ENCODE measurements at regions of chr4 and their contacts with region 1.

Region 1: GRCh38 chr4:7192252-7193029 is at the start of gene SORCS2:
- DNase-seq: peak in 1 of 2 experiments; percentile 82
- H3K4me3 ChIP-seq: peak within 1 kb of the TSS; percentile 71
- H3K27ac ChIP-seq: no peak within 1 kb of the TSS
- H3K4me1 ChIP-seq: peaks cover 37% of the 10 kb centered on the region
- H3K27me3 ChIP-seq: peaks cover 3% of the 10 kb centered on the region
- CTCF ChIP-seq: no peak; the same call in 1 of the 2 replicates
- total RNA-seq, gene SORCS2: 20.7 and 25.8 TPM in 2 replicates

Region 2: DNA sequence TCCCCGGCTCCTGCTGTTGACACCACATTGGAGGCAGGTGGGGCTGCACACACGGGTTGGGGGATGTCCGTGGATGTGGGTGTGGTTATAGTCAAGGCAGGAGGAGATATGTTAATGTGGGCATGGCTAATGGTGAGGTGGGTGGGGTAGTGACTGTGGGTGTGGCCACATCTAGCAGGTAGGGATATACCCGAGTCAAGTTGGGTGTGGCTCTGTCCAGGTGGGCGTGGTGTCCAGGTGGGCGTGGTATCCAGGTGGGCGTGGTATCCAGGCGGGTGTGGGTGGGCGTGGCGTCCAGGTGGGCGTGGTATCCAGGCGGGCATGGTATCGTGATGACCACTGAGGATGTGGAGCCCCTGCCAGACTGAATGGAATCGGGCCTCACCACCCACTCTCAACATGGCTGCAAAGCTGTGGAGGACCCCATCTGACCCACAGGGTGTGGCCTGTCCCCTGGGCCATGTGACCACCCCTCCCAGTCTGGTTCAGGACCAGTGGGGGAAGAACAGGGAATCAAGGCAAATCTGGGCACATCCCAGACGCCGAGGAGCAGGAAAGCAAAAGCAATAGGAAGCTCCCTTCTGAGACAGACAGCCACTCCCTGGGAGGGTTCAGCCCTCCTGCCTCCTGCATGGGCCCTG is 596.4 kb before region 1 on chr4:
- CTCF ChIA-PET with region 1: no interaction called
- POLR2A ChIA-PET with region 1: no interaction called
- intact Hi-C with region 1: no loop called
- DNase-seq: peak in 1 of 2 experiments; percentile 55
- H3K4me3 ChIP-seq: no peak overlapping the region
- H3K27ac ChIP-seq: no peak overlapping the region
- H3K4me1 ChIP-seq: no peaks in the 10 kb centered on the region
- H3K27me3 ChIP-seq: no peaks in the 10 kb centered on the region
- CTCF ChIP-seq: no peak

Region 3: DNA sequence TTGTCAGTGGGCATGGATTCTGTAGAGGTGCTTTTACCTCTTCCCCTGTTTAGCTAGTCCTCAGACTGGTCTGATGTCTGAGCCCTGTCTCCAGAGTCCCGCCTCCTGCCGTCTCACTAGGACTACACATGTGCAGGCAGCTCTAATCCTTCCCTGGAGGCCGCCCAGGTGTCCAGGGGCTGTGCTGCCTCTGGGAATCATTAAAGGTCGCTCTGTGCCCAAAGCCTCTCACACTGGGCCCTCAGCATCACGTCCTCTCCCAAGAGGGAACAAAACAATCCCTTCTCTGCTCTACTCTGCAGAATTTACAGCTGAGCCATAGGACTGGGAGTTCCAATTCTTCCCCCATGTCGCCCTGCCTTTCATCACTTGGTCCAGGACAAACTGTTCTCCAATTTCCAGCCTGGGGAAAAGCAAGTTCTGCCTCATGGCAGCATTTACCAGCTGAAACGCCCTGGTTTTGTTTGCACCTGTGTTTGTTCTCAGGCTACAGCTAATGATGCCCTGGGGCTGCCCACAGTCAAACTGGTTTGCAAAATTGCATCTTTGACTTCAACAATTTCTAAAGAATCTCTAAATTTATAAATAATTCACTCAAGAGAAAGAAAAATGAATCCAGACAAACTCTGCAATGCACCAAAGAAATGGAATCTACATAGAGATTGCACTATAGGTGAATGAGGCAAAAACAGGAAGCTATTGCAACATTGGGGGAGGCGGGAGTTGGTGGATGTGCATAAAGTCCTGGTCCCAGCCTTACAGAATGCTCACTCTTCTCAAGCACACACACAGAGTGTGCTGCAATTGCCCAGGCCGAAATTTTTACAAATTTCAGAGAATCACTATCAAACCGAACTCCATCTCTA is 559.2 kb before region 1 on chr4:
- CTCF ChIA-PET with region 1: no interaction called
- POLR2A ChIA-PET with region 1: no interaction called
- intact Hi-C with region 1: no loop called
- DNase-seq: peak; percentile 25 to 80
- H3K4me3 ChIP-seq: no peak overlapping the region
- H3K27ac ChIP-seq: peak overlapping the region; percentile 89
- H3K4me1 ChIP-seq: peaks cover 22% of the 10 kb centered on the region
- H3K27me3 ChIP-seq: no peaks in the 10 kb centered on the region
- CTCF ChIP-seq: no peak

Region 4: GRCh38 chr4:6716018-6716911 is 476.2 kb before region 1 on chr4 and contains the start of gene BLOC1S4:
- CTCF ChIA-PET with region 1: no interaction called
- POLR2A ChIA-PET with region 1: interaction called, 21 read pairs
- intact Hi-C with region 1: no loop called
- DNase-seq: peak; percentile 72 to 87
- H3K4me3 ChIP-seq: peak within 1 kb of the TSS; percentile 94
- H3K27ac ChIP-seq: peak within 1 kb of the TSS; percentile 51
- H3K4me1 ChIP-seq: peaks cover 11% of the 10 kb centered on the region
- H3K27me3 ChIP-seq: no peaks in the 10 kb centered on the region
- CTCF ChIP-seq: no peak
- total RNA-seq, gene BLOC1S4: 11.7 and 13.9 TPM in 2 replicates

Region 5: DNA sequence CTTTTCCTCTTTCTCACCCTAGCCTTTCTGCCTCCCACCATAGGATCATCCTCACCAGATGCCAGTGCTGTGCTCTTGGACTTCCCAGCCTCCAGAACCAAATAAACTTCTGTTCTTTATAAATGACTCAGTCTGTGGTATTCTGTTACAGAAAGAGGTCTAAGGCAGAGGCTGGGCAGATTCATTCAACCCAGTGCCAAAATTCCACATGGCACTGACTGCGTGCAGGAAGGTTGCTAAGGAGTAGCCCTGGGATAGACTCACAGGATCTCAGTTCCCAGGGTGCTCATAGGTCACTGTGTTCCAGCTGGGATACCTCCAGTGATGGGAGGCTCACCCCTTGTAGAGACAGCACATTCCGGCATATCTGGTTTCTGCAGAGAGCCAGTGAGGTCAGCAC is 21.9 kb after region 1 on chr4:
- CTCF ChIA-PET with region 1: interaction called, 4 read pairs
- POLR2A ChIA-PET with region 1: no interaction called
- intact Hi-C with region 1: loop called (anchors 2 kb)
- DNase-seq: no peak
- H3K4me3 ChIP-seq: no peak overlapping the region
- H3K27ac ChIP-seq: peak overlapping the region; percentile 90
- H3K4me1 ChIP-seq: peaks cover 67% of the 10 kb centered on the region
- H3K27me3 ChIP-seq: no peaks in the 10 kb centered on the region
- CTCF ChIP-seq: no peak

Region 6: GRCh38 chr4:7280926-7281690 is 88.7 kb after region 1 on chr4:
- CTCF ChIA-PET with region 1: interaction called, 3 read pairs
- POLR2A ChIA-PET with region 1: no interaction called
- intact Hi-C with region 1: loop called (anchors 5 kb)
- DNase-seq: no peak
- H3K4me3 ChIP-seq: no peak overlapping the region
- H3K27ac ChIP-seq: no peak overlapping the region
- H3K4me1 ChIP-seq: peaks cover 6% of the 10 kb centered on the region; the same call in 1 of the 2 replicates
- H3K27me3 ChIP-seq: no peaks in the 10 kb centered on the region
- CTCF ChIP-seq: no peak

Region 7: DNA sequence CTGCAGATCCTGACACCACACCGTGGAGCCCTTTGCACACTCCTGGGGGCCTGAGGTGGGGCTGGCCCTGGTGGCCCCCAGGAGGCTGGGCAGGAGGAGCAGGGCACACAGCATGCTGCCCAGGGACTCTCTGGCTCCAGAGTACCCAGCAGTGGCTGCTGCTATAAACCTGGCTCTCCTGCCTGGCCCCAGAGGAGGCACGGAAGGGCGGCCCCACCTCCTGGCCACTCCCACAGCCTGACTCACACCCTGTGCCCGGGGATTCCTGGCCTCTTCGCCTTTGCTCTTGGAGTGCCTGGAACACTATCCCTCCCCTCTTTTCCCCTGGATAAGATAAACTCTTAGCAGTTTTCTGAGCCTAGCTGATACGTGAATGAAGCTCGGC is 242.3 kb after region 1 on chr4 and contains the start of gene PSAPL1:
- CTCF ChIA-PET with region 1: no interaction called
- POLR2A ChIA-PET with region 1: no interaction called
- intact Hi-C with region 1: loop called (anchors 2 kb)
- DNase-seq: peak; percentile 62 to 79
- H3K4me3 ChIP-seq: no peak within 1 kb of the TSS
- H3K27ac ChIP-seq: no peak within 1 kb of the TSS
- H3K4me1 ChIP-seq: peaks cover 26% of the 10 kb centered on the region
- H3K27me3 ChIP-seq: no peaks in the 10 kb centered on the region
- CTCF ChIP-seq: no peak
- total RNA-seq, gene PSAPL1: 0.15 TPM in 2 replicates

Region 8: DNA sequence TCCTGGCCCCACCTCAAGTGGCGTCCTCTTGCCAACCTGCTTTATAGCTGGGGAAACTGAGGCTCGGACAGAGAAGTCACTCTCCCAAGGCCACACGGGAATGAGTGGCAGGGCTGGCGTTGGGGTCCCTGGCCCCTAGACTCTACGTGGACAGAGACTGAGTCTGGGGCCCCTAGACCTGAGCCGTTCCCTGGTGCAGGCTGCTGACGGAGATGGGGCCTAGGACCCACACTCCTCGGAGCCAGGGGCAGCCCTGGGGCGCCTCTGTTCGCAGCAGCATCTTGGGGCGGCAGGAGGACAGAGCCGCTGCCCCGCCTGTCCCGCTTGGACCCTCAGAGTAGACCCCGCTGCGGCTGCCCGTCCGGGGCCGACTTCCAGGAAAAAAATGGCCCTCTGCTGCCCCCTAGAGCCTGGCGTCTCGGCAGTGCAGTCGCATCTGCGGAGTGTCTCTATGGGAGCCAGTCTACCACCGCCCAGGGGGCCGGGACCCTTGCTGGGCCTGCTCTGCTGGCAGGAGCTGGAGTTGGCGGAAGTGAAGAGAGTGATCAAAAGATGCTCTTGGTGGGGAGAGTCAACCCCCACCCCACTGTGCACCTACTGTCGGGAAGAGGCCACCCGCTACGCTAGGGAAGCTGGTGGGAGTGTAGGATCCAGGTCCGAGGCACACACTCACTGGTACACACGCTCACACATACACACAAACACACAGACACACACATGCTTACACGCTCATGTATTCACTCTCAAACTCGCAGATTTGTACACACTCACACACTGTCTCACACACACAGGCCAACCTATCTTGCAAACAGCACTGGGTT is 527.1 kb after region 1 on chr4:
- CTCF ChIA-PET with region 1: interaction called, 3 read pairs
- POLR2A ChIA-PET with region 1: no interaction called
- intact Hi-C with region 1: loop called (anchors 2 kb)
- DNase-seq: peak in 1 of 2 experiments; percentile 54
- H3K4me3 ChIP-seq: no peak overlapping the region
- H3K27ac ChIP-seq: no peak overlapping the region
- H3K4me1 ChIP-seq: no peaks in the 10 kb centered on the region
- H3K27me3 ChIP-seq: no peaks in the 10 kb centered on the region
- CTCF ChIP-seq: peak; percentile 84

Region 9: DNA sequence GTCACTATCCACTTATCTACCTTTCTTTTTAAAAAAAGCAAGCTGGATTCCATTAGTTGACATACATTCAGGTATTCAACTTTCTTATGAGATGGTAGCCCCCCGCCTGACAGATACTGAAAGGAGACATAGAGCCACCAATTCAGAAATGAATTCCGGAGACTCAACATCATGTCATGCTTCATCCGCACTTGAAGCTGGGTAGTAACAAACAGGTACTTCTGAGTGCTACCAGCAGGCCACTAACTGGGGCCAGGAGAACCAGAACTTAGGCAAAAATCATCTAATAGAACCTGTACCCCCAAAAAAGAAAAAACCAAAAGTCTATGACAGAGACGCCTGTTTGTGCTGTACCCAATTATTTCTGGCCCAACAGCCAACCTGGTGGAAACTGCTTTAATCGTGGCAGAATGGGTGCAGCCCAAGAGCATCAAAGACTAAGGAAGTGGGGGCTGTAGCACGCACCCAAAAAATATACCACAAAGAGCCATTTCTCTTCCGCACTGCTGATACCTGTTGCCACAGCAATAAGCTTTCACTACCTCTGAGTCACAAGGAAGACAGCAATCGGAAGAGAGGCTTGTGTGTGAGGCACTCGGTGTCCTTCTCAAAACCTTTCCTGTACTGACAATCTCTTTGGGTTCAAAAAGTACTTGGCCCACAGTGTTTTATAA is 662.4 kb after region 1 on chr4:
- CTCF ChIA-PET with region 1: no interaction called
- POLR2A ChIA-PET with region 1: interaction called, 15 read pairs
- intact Hi-C with region 1: loop called (anchors 5 kb)
- DNase-seq: peak in 1 of 2 experiments; percentile 22
- H3K4me3 ChIP-seq: no peak overlapping the region
- H3K27ac ChIP-seq: no peak overlapping the region
- H3K4me1 ChIP-seq: no peaks in the 10 kb centered on the region
- H3K27me3 ChIP-seq: no peaks in the 10 kb centered on the region
- CTCF ChIP-seq: no peak

Region 10: GRCh38 chr4:8560267-8561047 is 1368.0 kb after region 1 on chr4:
- CTCF ChIA-PET with region 1: no interaction called
- POLR2A ChIA-PET with region 1: no interaction called
- intact Hi-C with region 1: no loop called
- DNase-seq: peak; percentile 55 to 94
- H3K4me3 ChIP-seq: peak overlapping the region; percentile 69
- H3K27ac ChIP-seq: peak overlapping the region; percentile 95
- H3K4me1 ChIP-seq: peaks cover 74% of the 10 kb centered on the region
- H3K27me3 ChIP-seq: no peaks in the 10 kb centered on the region
- CTCF ChIP-seq: no peak

Measured in PC-9 (cell line).